ENCODE measurements at regions of chr7 and their contacts with region 1.

Region 1: DNA sequence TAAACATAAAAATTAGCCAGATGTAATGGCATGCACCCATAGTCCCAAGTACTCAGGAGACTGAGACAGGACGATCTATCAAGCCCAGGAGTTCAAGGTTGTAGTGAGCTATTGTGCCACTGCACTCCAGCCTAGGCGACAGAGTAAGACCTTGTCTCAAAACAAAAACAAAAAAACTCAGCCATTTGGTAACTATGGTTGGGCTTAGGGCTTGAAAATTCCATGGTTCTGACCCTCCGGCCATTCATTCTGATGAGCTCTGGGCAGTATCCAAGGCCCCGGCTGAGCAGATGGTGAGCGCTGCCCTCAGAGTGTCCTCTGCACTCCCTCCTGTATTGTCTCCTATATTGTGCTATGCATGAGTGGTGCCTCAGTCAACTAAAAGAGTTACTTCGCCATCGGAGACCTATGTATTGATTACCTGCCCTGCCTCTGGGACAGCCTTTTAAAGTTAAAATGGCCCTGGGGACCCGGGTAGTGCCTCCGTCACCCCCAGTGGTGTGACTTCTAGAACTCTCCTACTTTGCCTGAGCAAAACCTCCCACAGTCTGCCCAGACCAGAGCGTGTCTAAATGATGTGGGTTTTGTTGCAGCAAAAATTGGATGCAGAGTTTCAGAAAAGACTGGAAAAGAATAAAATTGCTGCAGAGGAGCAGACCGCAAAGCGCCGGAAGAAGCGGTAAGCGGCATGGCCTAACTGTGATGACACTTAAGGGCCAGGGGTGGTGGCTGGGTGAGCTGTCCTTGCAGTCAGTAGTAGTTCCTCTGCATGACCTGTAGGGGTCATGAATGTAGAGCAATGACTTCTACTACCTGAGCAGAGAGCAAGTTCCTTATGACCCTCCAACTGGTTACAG is 8.1 kb downstream of the PRKRIP1 start:
- DNase-seq: peak in 11 of 14 experiments; percentile 24 to 83 (median 41)
- ATAC-seq: peak; percentile 100
- H3K4me3 ChIP-seq: no peak overlapping the region
- H3K4me3 Mint-ChIP-seq: no peak overlapping the region
- H3K27ac ChIP-seq: no peak overlapping the region
- H3K27ac Mint-ChIP-seq: peak overlapping the region; percentile 61
- H3K4me1 ChIP-seq: peaks cover 4% of the 10 kb centered on the region
- H3K4me1 Mint-ChIP-seq: peaks cover 7% of the 10 kb centered on the region
- H3K27me3 ChIP-seq: no peaks in the 10 kb centered on the region
- H3K27me3 Mint-ChIP-seq: no peaks in the 10 kb centered on the region
- CTCF ChIP-seq: peak; percentile 82

Region 2: DNA sequence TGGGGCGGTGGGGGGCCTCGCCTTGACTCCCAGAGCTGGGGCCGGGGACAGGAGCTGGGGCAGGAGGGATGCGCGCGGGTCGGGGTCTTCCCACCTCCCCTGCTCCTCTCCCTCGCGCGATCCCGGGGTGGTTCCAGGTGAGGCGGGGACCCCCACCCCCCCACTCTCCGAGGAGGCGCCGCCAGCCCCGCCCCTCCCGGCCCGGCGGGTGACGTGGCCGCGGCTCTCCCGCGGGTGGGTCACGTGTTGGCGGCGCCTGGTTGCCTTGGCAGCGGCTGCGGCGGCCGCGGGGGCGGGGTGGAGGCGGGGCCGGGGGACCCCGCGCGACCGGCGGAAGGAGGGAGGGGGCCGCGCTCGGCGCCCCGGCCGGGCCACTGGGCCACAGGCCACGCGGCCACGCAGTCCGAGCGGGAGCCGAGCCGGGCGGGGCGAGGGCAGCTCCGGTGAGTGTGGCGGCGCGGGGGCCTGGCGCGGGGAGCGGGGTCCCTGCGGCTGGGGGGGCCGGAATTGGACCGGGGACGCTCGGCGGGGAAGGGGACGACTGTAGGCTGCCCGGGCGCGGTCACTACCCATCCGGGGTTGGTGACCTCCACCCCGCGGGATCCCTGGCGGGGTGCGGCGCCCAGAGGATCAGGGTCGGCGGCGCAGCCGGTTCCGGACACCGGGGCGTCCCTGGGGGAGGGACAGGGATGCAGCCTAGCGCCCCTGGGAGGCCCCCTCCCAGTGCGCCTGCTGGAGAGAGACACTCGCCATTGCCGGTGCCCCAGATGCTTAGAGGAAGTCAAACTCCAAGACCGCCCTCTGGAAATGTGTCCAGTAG is 29.2 kb after region 1 on chr7 and contains the start of gene ORAI2:
- CTCF ChIA-PET with region 1: interaction called, 13 read pairs
- POLR2A ChIA-PET with region 1: interaction called, 4 read pairs
- intact Hi-C with region 1: loop called in 1 of 2 experiments (anchors 5 kb)
- DNase-seq: peak; percentile 71 to 93 (median 87)
- ATAC-seq: peak; percentile 56
- H3K4me3 ChIP-seq: peak within 1 kb of the TSS; percentile 79
- H3K4me3 Mint-ChIP-seq: peak within 1 kb of the TSS; percentile 94
- H3K27ac ChIP-seq: peak within 1 kb of the TSS; percentile 92 to 95
- H3K27ac Mint-ChIP-seq: peak within 1 kb of the TSS; percentile 100
- H3K4me1 ChIP-seq: peaks cover 68% of the 10 kb centered on the region
- H3K4me1 Mint-ChIP-seq: peaks cover 47% of the 10 kb centered on the region
- H3K27me3 ChIP-seq: no peaks in the 10 kb centered on the region
- H3K27me3 Mint-ChIP-seq: no peaks in the 10 kb centered on the region
- CTCF ChIP-seq: no peak
- total RNA-seq, gene ORAI2: 12.3 to 16.5 TPM

Region 3: DNA sequence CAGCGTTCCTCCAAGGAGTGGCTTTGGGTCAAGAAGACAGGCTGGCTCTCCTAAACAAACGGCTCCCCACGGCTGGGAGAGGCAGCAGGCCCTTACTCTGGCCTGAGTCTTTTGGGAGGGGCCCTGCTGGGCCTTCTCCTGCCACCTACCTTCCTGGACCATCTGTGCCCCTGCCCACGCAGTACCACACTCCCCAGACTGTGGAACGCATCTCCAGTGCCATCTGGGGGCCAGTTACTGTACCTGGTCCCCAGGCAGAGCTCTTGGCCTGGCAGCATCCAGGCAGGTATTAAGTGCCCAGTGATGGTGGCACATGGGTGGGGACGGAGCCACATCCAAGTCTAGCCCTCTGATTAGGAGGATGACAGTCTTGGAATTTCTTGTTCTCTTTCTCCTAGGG is 46.0 kb after region 1 on chr7:
- CTCF ChIA-PET with region 1: interaction called, 11 read pairs
- POLR2A ChIA-PET with region 1: interaction called, 6 read pairs
- intact Hi-C with region 1: loop called (anchors 1 kb)
- DNase-seq: peak; percentile 44 to 79 (median 56)
- ATAC-seq: peak; percentile 95
- H3K4me3 ChIP-seq: no peak overlapping the region
- H3K4me3 Mint-ChIP-seq: no peak overlapping the region
- H3K27ac ChIP-seq: no peak overlapping the region
- H3K27ac Mint-ChIP-seq: no peak overlapping the region
- H3K4me1 ChIP-seq: peaks cover 5% of the 10 kb centered on the region
- H3K4me1 Mint-ChIP-seq: peaks cover 4% of the 10 kb centered on the region
- H3K27me3 ChIP-seq: no peaks in the 10 kb centered on the region
- H3K27me3 Mint-ChIP-seq: no peaks in the 10 kb centered on the region
- CTCF ChIP-seq: peak; percentile 66